Sciatic nerve (tissue), 2 donors: ENCODE measurements at regions of chr10 and their contacts with region 1.

Region 1: DNA sequence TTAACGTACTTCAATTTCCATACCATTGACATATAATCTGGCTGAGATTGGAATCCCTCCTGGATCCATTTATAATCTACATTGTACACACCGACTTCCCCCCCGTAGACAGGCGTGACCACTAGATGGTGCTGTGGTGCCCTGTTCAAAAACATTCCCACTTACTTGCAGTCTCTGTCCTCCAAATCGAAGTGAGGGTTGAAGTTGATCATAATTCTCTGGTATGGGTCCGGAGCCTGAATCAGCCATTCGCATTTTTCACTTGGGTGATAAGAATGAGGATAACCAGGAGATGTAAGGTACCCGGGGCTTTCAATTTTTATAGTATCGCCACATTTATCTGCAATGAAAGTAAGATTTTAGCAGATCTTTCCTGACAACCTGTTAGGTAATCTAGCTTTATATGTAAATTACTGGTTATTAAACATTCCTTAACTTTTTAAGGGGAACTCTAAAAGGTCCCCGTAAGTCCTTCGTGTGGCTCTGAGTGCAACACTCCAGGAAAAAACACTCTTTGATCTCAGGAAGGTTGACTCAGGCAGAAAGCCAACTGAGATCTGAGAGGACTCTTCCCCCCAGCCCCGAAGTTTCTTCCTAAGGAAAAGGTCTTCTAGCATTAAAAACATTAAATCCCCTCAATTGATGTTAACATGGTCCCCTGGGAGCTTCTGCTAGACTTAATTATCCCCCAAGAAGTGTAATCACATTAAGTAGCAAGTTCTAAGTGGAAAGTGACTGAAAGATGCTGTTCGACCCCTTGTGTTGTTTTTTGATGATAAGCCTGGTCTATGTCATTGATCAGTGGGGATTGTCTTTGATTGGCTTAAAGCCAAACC is 3.7 kb downstream of the NRP1 start:
- DNase-seq: peak; percentile 96
- ATAC-seq: peak; percentile 53

Region 2: GRCh38 chr10:33365871-33366411 is 35.2 kb after region 1 on chr10:
- intact Hi-C with region 1: no loop called
- DNase-seq: no peak
- ATAC-seq: peak; percentile 65

Region 3: GRCh38 chr10:34637418-34637911 is 1306.7 kb after region 1 on chr10:
- intact Hi-C with region 1: loop called (anchors 10 kb)
- DNase-seq: peak; percentile 81
- ATAC-seq: peak; percentile 62